Activated T-helper 1 cell treated with anti-CD3 and anti-CD28 coated beads, Interleukin-12 subunit alpha, Interleukin-12 subunit beta, Interleukin-2, Interleukin-4 antibody, amounts not matched to agents 30 ng/mL and 10 ng/mL and 1 ng/mL, durations not matched to agents 14 hours and 24 hours and 36 hours (primary cell): ENCODE measurements at regions of chr4 and their contacts with region 1.

Region 1: GRCh38 chr4:39977489-39978377 is at the start of gene PDS5A:
- DNase-seq: peak; percentile 90
- H3K4me3 Mint-ChIP-seq: peak within 1 kb of the TSS; percentile 95
- H3K27ac Mint-ChIP-seq: peak within 1 kb of the TSS; percentile 94
- H3K4me1 Mint-ChIP-seq: peaks cover 33% of the 10 kb centered on the region
- H3K27me3 Mint-ChIP-seq: no peaks in the 10 kb centered on the region
- total RNA-seq, gene PDS5A: 129 and 131 TPM in 2 replicates

Region 2: DNA sequence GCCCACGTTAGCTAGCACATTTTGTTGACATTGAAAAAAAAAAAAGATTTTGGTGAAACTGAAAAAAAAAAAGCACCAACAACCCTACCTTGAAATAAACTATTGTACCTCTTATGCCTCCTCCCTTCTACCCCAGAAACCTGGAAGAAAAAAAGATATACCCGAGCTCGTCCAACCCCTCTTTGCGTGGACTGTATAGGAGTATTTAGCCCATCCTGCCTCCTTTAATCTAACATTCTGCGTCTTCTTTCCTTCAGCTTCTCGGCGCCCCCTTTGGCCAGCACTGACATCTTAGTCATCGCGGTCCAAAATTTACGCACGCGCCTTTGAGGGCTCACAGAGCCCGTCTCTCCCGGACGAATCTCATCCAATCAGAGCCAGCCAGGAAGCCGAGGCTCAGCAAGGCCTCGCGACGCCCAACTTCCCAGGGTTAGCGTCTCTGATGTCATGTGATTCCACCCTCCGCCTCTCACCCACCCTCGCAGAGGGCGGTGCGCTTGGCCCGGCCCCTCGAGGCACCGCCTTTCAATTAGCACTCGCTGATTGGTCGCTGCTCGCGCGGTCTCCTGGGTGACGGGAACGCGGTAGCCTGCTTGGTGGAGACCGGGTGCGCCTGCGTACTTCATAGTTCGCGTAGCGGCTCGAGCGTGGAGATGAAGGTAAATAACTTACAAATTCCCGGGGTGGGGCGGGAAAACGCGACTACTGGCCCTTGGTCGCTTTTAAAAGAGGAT is 795.7 kb before region 1 on chr4 and contains the start of gene WDR19:
- intact Hi-C with region 1: loop called (anchors 5 kb)
- DNase-seq: peak; percentile 98
- H3K4me3 Mint-ChIP-seq: no peak within 1 kb of the TSS
- H3K27ac Mint-ChIP-seq: no peak within 1 kb of the TSS
- H3K4me1 Mint-ChIP-seq: no peaks in the 10 kb centered on the region
- H3K27me3 Mint-ChIP-seq: peaks cover 15% of the 10 kb centered on the region
- total RNA-seq, gene WDR19: 12.6 and 13.7 TPM in 2 replicates

Region 3: DNA sequence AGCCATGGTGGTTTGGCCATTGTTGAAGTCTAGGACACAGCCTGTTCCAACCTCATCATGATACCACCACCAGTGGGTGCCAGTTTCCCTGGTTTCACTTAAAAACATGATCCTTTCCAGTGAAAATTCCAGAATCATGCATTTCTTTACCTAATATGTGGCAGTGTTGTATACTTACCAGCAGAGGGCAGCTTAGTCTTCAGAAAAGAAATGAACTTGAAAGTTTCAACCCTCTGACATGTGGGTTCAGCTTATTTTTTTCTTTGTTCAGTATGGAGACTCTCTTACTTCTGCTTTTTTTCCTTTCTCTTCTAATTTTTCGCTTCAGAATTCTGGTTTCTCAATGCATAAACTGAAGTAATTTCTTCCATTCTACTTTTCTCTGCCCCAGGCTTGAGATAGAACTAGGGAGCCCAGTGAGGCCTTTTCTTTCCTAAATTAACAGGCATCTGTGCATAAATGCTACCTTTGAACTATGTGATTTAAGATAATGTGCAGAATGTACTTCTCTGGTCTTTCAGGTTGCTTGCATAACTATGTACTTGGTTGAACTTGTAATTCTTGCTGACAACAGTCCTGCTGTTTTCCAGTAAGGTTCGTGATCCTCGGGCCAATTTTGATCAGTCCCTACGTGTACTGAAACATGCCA is 508.2 kb before region 1 on chr4:
- intact Hi-C with region 1: loop called (anchors 1 kb)
- DNase-seq: no peak
- H3K4me3 Mint-ChIP-seq: no peak overlapping the region
- H3K27ac Mint-ChIP-seq: no peak overlapping the region
- H3K4me1 Mint-ChIP-seq: peaks cover 8% of the 10 kb centered on the region
- H3K27me3 Mint-ChIP-seq: no peaks in the 10 kb centered on the region

Region 4: GRCh38 chr4:39697740-39698423 is 279.9 kb before region 1 on chr4 and contains the start of gene UBE2K:
- intact Hi-C with region 1: loop called (anchors 1 kb)
- DNase-seq: peak; percentile 91
- H3K4me3 Mint-ChIP-seq: peak within 1 kb of the TSS; percentile 97
- H3K27ac Mint-ChIP-seq: peak within 1 kb of the TSS; percentile 97
- H3K4me1 Mint-ChIP-seq: peaks cover 37% of the 10 kb centered on the region
- H3K27me3 Mint-ChIP-seq: no peaks in the 10 kb centered on the region
- total RNA-seq, gene UBE2K: 92.2 and 96.4 TPM in 2 replicates

Region 5: DNA sequence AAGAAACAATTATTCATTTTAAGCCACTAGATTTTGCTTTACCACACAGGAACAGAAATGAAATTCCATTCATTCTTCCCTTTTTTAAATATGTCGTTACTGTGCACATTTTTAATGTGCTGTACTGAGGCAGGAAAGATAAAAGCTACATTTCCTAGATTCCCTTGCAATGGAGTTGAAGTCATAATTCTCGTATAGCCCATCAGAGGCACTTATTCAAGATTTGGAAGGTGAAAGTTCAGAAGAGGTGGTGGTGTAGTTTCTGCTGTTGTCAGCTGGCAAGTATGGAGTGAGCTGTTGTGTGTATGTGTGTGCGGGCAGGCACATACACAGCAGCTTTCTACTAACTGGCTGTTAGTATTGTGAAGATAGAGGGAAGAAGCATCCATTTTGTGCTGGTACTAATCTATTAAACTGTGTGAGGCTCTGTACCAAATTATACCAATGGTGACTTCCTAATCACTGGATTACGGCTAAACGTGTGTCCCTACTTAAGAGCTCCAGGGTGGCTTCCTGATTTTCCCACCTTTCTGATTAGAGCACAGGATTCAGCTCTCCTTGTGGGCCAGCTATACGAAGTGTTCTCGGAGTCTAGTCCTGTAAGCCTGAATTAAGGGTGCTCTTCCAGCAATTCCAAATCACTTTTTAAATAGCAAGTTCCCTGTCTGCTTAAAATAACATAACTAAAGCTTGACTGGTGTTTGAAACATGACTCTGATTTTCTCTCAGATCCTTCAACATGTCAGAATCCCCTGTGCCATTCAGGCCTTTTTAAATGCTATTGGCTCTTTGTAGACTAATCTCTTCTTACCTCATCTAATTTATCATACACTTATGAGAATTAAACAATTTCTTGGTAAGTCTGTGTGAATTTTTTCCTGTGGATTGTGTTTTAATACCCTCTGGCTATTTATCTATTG is 43.8 kb before region 1 on chr4:
- intact Hi-C with region 1: loop called (anchors 1 kb)
- DNase-seq: no peak
- H3K4me3 Mint-ChIP-seq: no peak overlapping the region
- H3K27ac Mint-ChIP-seq: no peak overlapping the region
- H3K4me1 Mint-ChIP-seq: peaks cover 60% of the 10 kb centered on the region
- H3K27me3 Mint-ChIP-seq: no peaks in the 10 kb centered on the region

Region 6: DNA sequence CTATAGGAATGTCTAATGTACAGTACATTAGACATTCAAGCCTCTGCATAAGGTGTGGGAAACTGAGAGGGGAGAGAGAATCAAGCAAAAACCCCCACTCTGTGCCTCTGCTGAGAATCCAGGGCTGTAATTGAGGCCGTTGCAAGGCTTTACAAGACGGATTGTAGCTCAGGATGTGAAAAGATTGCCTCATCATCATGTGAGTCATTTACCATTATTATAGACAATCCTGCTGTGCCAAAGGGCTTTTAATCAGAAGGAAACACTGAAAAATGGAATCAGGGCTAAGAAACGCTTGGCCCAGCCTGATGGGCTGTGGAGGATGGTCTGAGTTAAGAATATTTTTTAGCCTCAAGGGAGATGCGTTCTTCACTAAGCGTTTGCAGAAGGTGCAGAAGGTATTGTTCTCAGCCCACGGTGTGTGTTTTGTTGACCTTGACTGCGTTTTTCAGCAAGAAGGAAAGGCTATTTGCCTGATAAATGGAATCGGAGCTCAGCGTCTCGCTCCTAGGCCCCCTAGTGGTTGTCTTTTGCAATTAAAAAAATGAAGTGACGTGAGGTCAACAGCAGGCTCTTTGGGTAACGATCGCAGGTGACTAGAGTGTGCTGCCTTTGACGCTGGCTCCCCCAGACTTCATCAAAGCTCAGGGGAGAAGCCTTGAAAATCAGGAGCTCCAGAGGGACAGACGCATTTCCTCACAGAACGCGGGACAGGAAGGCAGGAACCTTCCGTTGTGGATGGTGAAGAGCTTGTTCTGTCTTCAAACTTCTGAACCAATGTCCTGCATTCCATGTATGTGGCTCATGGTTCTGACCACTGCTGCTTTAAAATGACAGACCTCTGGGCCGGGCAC is 339.3 kb after region 1 on chr4:
- intact Hi-C with region 1: loop called (anchors 5 kb)
- DNase-seq: peak; percentile 59
- H3K4me3 Mint-ChIP-seq: peak overlapping the region; percentile 83
- H3K27ac Mint-ChIP-seq: peak overlapping the region; percentile 99
- H3K4me1 Mint-ChIP-seq: peaks cover 58% of the 10 kb centered on the region
- H3K27me3 Mint-ChIP-seq: no peaks in the 10 kb centered on the region